MCF 10A (cell line): ENCODE measurements at regions of chr1 and their contacts with region 1.

Region 1: GRCh38 chr1:234610348-234611152 is 572 bp upstream of the IRF2BP2 start:
- DNase-seq: peak; percentile 96
- H3K4me3 Mint-ChIP-seq: peak overlapping the region; percentile 95
- H3K27ac Mint-ChIP-seq: peak overlapping the region; percentile 95
- H3K4me1 Mint-ChIP-seq: peaks cover 51% of the 10 kb centered on the region
- H3K27me3 Mint-ChIP-seq: no peaks in the 10 kb centered on the region
- CTCF ChIP-seq: no peak

Region 2: GRCh38 chr1:234486498-234487448 is 123.8 kb before region 1 on chr1:
- CTCF ChIA-PET with region 1: interaction called, 15 read pairs
- POLR2A ChIA-PET with region 1: interaction called, 6 read pairs
- intact Hi-C with region 1: no loop called
- DNase-seq: peak; percentile 87
- H3K4me3 Mint-ChIP-seq: no peak overlapping the region
- H3K27ac Mint-ChIP-seq: no peak overlapping the region
- H3K4me1 Mint-ChIP-seq: peaks cover 15% of the 10 kb centered on the region
- H3K27me3 Mint-ChIP-seq: peaks cover 20% of the 10 kb centered on the region
- CTCF ChIP-seq: peak; percentile 96

Region 3: DNA sequence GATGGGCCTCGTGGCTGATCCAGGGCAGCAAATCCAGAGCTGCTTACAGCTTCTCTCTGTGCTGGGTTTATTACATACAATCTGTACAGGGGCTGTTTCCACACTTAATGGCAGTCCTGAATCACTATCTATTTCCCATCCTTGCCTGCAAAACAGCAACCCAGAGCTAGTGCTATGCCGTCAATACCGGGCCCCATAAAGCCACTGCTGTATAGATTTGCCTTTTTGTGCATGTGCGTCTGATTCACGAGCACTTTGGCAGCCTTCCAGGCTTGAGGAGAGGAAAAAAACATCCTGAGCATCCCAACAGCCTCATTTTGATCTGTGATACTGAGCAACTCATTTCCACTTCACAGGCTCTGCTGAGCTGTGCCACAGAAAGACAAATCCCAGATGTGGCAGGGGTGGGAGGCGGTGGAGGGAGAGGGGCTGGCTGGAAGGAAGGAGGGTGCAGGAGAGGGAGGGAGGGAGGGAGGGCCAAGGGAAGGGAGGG is 66.4 kb before region 1 on chr1:
- CTCF ChIA-PET with region 1: interaction called, 4 read pairs
- POLR2A ChIA-PET with region 1: interaction called, 467 read pairs
- intact Hi-C with region 1: no loop called
- DNase-seq: peak; percentile 96
- H3K4me3 Mint-ChIP-seq: no peak overlapping the region
- H3K27ac Mint-ChIP-seq: peak overlapping the region; percentile 80
- H3K4me1 Mint-ChIP-seq: peaks cover 36% of the 10 kb centered on the region
- H3K27me3 Mint-ChIP-seq: no peaks in the 10 kb centered on the region
- CTCF ChIP-seq: no peak

Region 4: DNA sequence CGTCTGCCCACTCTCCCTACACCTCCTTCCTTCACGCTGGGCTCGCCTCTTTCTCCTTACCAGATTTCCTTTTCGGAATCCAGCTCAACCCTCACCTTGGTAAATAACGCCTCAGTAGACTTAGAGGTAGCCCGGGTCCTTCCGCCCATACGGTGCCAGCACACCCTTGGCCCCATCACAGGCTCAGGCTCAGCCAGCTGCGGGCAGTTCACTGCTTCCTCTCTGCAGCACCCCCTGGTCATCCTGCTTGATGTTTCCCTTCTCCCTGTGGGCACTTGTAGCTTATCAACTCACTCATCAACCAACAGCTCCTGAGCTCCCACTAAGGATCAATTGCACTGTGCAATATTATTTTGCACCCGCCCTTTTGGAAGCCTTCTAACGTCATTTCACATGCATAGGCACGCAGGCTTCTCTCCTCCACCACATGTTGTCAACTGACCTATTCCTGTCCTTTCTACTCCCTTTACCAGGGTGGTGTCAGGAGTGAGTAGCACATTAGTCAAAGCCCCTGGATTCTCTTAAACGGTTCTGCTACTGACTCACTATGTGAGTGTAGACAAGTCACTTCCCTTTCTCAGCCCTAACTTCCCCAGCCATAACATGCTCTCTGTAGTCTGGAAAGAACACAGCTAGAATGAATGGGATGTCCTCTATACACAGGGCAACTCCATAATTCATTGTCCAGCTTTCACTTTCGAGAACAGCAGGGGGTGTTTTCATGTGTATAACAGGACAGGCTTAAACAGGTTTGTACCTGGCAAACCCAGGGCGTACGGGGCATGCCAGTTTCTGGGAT is 46.5 kb after region 1 on chr1:
- CTCF ChIA-PET with region 1: interaction called, 65 read pairs
- POLR2A ChIA-PET with region 1: interaction called, 543 read pairs
- intact Hi-C with region 1: loop called (anchors 1 kb)
- DNase-seq: peak; percentile 100
- H3K4me3 Mint-ChIP-seq: peak overlapping the region; percentile 67
- H3K27ac Mint-ChIP-seq: peak overlapping the region; percentile 91
- H3K4me1 Mint-ChIP-seq: peaks cover 57% of the 10 kb centered on the region
- H3K27me3 Mint-ChIP-seq: no peaks in the 10 kb centered on the region
- CTCF ChIP-seq: no peak

Region 5: GRCh38 chr1:234772345-234773147 is 162.0 kb after region 1 on chr1:
- CTCF ChIA-PET with region 1: no interaction called
- POLR2A ChIA-PET with region 1: interaction called, 44 read pairs
- intact Hi-C with region 1: loop called (anchors 1 kb)
- DNase-seq: peak; percentile 100
- H3K4me3 Mint-ChIP-seq: peak overlapping the region; percentile 51
- H3K27ac Mint-ChIP-seq: peak overlapping the region; percentile 95
- H3K4me1 Mint-ChIP-seq: peaks cover 29% of the 10 kb centered on the region
- H3K27me3 Mint-ChIP-seq: no peaks in the 10 kb centered on the region
- CTCF ChIP-seq: no peak

Region 6: DNA sequence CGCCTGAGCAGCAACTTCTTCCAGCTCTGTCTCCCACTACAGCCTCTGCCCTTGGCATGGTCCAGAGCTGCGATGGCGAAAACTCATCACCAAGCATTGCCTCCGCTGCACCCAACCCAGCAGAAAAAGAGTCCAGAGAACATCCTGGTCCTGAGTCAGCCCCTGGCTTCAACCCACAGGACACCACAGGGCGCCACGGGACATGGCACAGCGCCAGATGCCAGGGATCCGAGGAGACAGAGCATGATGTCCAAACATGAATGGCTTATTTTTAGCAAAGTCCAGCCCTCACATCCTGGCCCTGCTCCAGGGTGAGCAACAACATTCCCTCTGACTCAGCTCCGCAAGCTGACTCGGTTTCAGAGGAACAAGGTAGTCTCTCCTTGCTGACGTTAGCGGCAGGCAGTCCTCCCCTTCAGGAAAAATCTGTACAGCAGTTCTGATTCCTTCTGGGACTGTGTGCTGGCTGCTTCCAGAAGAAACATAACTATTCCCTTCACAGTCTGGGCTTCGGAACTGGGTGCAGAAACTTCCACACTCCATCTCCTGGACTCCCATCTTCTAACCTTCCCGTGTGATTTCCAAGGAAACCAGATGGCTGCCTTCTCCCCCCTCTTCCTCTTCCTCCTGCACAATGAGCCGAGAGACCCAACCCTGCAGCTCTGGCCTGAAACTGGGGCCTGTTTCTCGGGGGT is 386.8 kb after region 1 on chr1:
- CTCF ChIA-PET with region 1: interaction called, 3 read pairs
- POLR2A ChIA-PET with region 1: interaction called, 154 read pairs
- intact Hi-C with region 1: loop called (anchors 1 kb)
- DNase-seq: peak; percentile 100
- H3K4me3 Mint-ChIP-seq: peak overlapping the region; percentile 58
- H3K27ac Mint-ChIP-seq: peak overlapping the region; percentile 93
- H3K4me1 Mint-ChIP-seq: peaks cover 26% of the 10 kb centered on the region
- H3K27me3 Mint-ChIP-seq: no peaks in the 10 kb centered on the region
- CTCF ChIP-seq: no peak

Region 7: DNA sequence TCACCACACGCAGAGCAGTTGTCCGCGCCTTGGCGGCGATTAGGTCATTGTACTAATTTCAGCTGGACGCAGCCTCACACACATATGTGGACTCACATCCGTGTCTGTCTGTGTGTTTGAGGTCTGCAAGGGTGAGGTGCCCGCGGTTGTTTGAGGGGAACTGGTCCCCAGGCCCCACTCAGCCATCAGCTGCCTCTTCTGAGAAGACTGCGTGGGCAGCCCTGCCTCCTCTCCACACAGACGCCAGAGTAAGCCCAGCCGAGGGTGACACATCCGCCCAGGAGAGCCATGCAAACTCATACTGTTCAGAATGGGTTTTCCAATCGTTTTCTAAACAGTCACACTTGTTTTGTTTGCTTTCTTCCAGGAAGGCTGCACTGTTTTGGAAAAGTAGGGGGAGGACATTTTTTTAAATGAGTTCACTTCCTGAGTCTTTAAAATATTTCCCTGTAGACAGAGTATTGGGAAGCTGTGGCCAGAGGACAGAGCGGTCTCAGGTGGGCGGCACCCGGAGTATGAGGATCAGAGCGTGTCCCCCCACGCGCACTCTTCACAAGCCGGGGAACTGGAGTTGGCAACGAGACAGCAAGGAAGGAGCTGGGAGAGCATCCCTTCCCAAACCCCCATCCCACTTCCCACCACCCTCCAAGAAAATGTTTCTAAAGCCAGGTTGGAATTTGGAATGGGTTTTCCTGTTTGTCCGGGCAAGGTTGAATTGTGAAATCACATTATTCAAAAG is 464.8 kb after region 1 on chr1:
- CTCF ChIA-PET with region 1: interaction called, 74 read pairs
- POLR2A ChIA-PET with region 1: interaction called, 406 read pairs
- intact Hi-C with region 1: no loop called
- DNase-seq: peak; percentile 92
- H3K4me3 Mint-ChIP-seq: no peak overlapping the region
- H3K27ac Mint-ChIP-seq: peak overlapping the region; percentile 52
- H3K4me1 Mint-ChIP-seq: peaks cover 30% of the 10 kb centered on the region
- H3K27me3 Mint-ChIP-seq: no peaks in the 10 kb centered on the region
- CTCF ChIP-seq: no peak